ENCODE measurements at regions of chr17 and their contacts with region 1.

Region 1: GRCh38 chr17:82236142-82236981 is 7.5 kb downstream of the SLC16A3 start:
- DNase-seq: peak; percentile 79 to 80
- ATAC-seq: peak; percentile 2 to 17; a peak in 3 of 6 replicates
- H3K4me3 ChIP-seq: no peak overlapping the region
- H3K27ac ChIP-seq: peak overlapping the region; percentile 68 to 71
- H3K4me1 ChIP-seq: peaks cover 83% of the 10 kb centered on the region
- CTCF ChIP-seq: peak; percentile 97
- EP300 ChIP-seq: no peak
- POLR2A ChIP-seq: no peak
- RAD21 ChIP-seq: peak; percentile 92 to 95

Region 2: DNA sequence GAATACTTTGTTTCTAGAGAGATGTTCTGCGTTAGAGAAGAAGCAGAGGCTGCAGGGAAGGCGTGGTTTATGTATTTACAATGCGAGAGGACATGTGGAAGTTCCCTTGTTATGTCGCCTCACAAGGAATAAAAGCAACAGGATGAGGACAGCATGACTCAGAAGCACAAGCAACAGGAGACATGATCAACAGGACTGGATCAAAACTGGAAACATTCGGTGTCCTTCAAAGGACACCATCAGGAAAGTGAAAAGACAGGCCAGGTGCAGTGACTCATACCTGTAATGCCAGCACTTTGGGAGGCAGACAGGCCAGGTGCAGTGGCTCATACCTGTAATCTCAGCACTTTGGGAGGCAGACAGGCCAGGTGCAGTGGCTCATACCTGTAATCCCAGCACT is 76.3 kb before region 1 on chr17:
- CTCF ChIA-PET with region 1: no interaction called
- POLR2A ChIA-PET with region 1: no interaction called
- DNase-seq: no peak
- ATAC-seq: no peak
- H3K4me3 ChIP-seq: no peak overlapping the region
- H3K27ac ChIP-seq: no peak overlapping the region
- H3K4me1 ChIP-seq: no peaks in the 10 kb centered on the region
- CTCF ChIP-seq: no peak
- EP300 ChIP-seq: no peak
- POLR2A ChIP-seq: no peak
- RAD21 ChIP-seq: no peak

Region 3: GRCh38 chr17:82212331-82213250 is 23.8 kb before region 1 on chr17 and contains the start of gene CCDC57:
- CTCF ChIA-PET with region 1: interaction called, 50 read pairs
- POLR2A ChIA-PET with region 1: no interaction called
- DNase-seq: peak; percentile 85 to 92
- ATAC-seq: peak; percentile 70 to 77
- H3K4me3 ChIP-seq: peak within 1 kb of the TSS; percentile 78
- H3K27ac ChIP-seq: peak within 1 kb of the TSS; percentile 95 to 96
- H3K4me1 ChIP-seq: peaks cover 48% of the 10 kb centered on the region
- CTCF ChIP-seq: no peak
- EP300 ChIP-seq: no peak
- POLR2A ChIP-seq: peak; percentile 65
- RAD21 ChIP-seq: no peak; a peak in 1 of 5 replicates
- polyA plus RNA-seq, gene CCDC57: 16.6 and 18.5 TPM in 2 replicates

Region 4: DNA sequence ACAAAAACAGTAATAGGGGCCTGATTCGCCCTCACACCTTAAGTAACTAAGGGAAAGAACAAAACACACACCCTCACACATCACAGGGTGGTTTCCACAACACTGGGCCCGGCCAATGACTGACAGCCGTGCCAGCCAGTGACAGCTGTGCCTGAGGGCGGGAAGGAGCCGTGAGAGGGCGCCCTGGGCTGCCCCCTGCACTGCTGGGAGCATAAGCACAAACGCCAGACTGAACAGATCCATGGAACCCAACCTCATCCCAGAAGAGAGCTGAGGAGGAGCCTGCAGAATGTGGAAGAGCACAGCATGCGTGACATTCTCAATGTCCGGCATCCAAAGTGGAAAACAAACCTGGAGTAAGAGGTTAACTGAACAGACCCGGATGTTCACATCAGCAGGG is 21.1 kb after region 1 on chr17:
- CTCF ChIA-PET with region 1: interaction called, 49 read pairs
- POLR2A ChIA-PET with region 1: no interaction called
- DNase-seq: peak in 1 of 2 experiments; percentile 74
- ATAC-seq: peak; percentile 76 to 91
- H3K4me3 ChIP-seq: no peak overlapping the region
- H3K27ac ChIP-seq: no peak overlapping the region
- H3K4me1 ChIP-seq: 0 out of 3 replicates have a peak, but pooled peaks cover 6% of the 10 kb centered on the region
- CTCF ChIP-seq: no peak
- EP300 ChIP-seq: no peak
- POLR2A ChIP-seq: no peak
- RAD21 ChIP-seq: no peak

Region 5: DNA sequence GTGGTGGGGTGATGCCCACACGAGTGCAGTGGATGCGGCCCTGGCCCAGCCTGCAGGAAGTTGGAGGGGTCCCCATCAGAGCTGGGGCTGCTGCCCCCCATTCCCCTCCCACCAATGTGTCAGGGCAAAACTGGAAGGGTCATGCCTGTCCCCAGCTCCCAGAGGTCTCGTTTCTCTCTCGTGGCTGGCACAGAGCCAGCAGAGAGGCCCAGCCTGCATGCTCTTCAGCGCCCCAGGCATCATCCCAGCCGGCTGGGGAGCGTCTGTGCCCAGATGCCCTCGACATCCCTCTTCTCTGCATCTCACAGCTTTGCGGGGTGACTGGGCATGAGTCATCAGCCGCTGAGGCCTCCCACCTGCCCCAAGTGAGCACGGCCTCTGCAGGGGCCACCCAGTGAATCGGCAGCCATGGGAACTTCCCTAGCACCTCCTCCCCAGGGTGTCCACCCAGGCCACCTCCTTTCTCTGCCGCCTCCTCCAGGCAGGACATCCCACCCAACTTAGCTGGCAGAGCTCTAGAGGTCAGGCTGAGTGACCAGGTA is 46.9 kb after region 1 on chr17:
- CTCF ChIA-PET with region 1: interaction called, 18 read pairs
- POLR2A ChIA-PET with region 1: no interaction called
- DNase-seq: peak; percentile 69
- ATAC-seq: peak; percentile 48 to 57
- H3K4me3 ChIP-seq: no peak overlapping the region
- H3K27ac ChIP-seq: peak overlapping the region; percentile 82 to 87
- H3K4me1 ChIP-seq: peaks cover 46% of the 10 kb centered on the region
- CTCF ChIP-seq: no peak
- EP300 ChIP-seq: peak; percentile 21 to 48; a peak in 2 of 5 replicates
- POLR2A ChIP-seq: no peak
- RAD21 ChIP-seq: no peak; a peak in 1 of 5 replicates

Region 6: DNA sequence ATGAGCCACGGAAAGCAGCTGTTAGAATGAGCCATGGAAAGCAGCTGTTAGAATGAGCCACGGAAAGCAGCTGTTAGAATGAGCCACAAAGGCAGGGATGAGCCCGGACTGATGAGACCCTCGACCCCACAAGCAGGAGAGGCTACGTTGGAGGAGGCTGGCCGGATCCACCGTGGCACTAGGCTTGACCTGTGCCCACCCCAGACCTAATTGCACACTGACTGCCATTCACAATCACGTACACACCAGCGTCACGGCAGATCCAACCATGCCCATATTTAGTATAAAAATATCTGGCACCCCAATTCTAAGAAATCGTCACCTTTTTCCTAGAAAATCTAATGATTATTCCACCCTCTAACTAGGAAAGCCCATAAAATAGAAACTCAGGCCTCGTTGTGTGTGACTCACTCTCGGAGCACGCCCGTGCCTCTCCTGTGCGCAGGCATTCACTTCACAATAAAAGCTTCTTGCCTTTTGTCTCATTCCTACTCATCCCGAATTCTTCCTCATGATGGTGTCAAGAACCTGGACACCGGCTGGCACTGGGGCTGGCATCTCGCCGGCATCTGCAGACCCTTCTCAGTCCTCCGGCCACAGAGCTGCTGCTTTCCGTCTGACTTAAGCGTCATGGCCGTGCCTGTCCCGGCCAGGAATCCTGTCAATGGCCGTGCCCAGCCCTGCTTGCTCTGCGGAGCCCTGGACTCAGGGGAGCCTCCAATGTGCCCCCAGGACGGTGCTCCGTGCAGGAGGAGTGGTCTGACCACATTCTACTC is 102.7 kb after region 1 on chr17:
- CTCF ChIA-PET with region 1: interaction called, 289 read pairs
- POLR2A ChIA-PET with region 1: no interaction called
- DNase-seq: peak; percentile 86 to 94
- ATAC-seq: peak; percentile 81 to 89
- H3K4me3 ChIP-seq: peak overlapping the region; percentile 37
- H3K27ac ChIP-seq: peak overlapping the region; percentile 86 to 92
- H3K4me1 ChIP-seq: peaks cover 42% of the 10 kb centered on the region
- CTCF ChIP-seq: no peak
- EP300 ChIP-seq: no peak
- POLR2A ChIP-seq: peak; percentile 29; the same call in 1 of the 2 replicates
- RAD21 ChIP-seq: no peak; a peak in 1 of 5 replicates

Region 7: DNA sequence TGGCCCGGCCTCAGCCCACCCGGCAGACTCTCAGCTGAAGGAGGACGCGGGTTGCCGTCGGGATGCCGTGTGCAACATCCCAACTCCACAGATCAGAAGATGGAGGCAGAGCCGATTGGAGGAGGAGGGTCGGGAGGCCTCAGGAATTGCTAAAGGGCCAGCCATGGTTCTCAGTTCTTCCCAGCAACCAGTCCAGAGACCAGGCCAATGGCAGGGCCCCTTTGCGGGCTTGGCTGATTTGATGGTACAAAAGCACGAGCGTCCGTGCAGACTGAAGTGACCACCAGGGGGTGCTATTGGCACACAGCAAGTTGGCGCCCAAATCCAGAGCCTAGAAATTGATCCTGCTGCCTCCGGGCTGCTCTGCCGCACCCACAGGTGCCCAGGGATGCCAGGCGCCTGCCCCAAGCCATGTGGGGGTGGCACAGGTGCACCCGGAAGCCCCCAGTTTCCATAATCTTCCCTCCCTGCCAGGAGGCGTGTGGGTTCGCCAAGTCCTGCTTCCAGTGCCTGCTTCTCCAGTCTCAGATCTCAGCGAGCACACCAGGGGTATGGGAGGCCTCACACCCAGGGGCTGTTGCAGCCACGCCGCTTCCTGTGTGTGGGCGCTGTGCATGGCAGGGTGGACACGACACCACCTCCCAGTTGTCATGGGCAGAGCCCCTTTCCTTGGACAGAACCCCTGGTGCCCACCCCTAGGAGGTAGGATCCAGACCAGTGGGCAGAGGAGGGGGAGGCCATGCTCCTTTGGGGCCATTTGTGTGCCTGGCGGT is 115.5 kb after region 1 on chr17:
- CTCF ChIA-PET with region 1: interaction called, 22 read pairs
- POLR2A ChIA-PET with region 1: no interaction called
- DNase-seq: peak; percentile 88 to 93
- ATAC-seq: peak; percentile 75 to 92
- H3K4me3 ChIP-seq: no peak overlapping the region
- H3K27ac ChIP-seq: no peak overlapping the region
- H3K4me1 ChIP-seq: peaks cover 19% of the 10 kb centered on the region; the same call in 2 of the 3 replicates
- CTCF ChIP-seq: peak; percentile 98
- EP300 ChIP-seq: no peak
- POLR2A ChIP-seq: no peak
- RAD21 ChIP-seq: peak; percentile 97

Measured in A549 (cell line).